Keratinocyte (primary cell): ENCODE measurements at regions of chr21 and their contacts with region 1.

Region 1: GRCh38 chr21:21200103-21200642 is 202.0 kb downstream of the NCAM2 start:
- DNase-seq: no peak
- H3K4me3 ChIP-seq: no peak overlapping the region
- H3K27ac ChIP-seq: no peak overlapping the region
- H3K4me1 ChIP-seq: peaks cover 5% of the 10 kb centered on the region
- H3K27me3 ChIP-seq: no peaks in the 10 kb centered on the region
- CTCF ChIP-seq: no peak

Region 2: GRCh38 chr21:21137986-21138385 is 62.2 kb before region 1 on chr21:
- dilution Hi-C with region 1: no loop called
- DNase-seq: no peak
- H3K4me3 ChIP-seq: no peak overlapping the region
- H3K27ac ChIP-seq: no peak overlapping the region
- H3K4me1 ChIP-seq: no peaks in the 10 kb centered on the region
- H3K27me3 ChIP-seq: no peaks in the 10 kb centered on the region
- CTCF ChIP-seq: no peak

Region 3: GRCh38 chr21:21324297-21324696 is 124.1 kb after region 1 on chr21:
- dilution Hi-C with region 1: loop called (anchors 25 kb)
- DNase-seq: no peak
- H3K4me3 ChIP-seq: no peak overlapping the region
- H3K27ac ChIP-seq: no peak overlapping the region
- H3K4me1 ChIP-seq: no peaks in the 10 kb centered on the region
- H3K27me3 ChIP-seq: no peaks in the 10 kb centered on the region
- CTCF ChIP-seq: no peak